ENCODE measurements at regions of chr15 and their contacts with region 1.

Region 1: DNA sequence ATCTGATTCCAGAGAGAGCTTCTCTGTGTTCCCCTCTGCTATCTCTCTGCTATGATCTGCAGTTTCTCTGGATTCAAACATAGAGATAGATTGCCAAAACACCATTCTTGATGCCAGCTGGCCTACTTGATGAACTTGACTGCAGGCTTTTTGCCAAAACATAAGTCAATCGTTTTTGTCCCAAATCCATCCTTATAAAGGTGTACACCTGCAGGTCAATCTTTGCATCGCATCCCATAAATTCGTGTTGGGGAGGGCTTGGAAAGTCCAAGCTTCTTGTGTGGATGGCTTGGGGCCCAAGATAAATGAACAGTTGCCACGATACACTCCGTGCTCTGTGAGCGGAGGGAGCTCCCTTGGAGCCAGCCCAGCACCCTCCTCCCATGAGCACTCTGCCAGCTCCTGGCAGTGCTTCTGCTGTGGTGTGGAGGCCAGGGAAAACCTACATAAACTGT is 2.7 kb downstream of the CERS3 start:
- DNase-seq: peak; percentile 84 to 90
- ATAC-seq: peak; percentile 85
- H3K4me3 ChIP-seq: peak overlapping the region in 1 of 4 donors; percentile 24
- H3K27ac ChIP-seq: peak overlapping the region; percentile 84 to 88 (median 86)
- H3K4me1 ChIP-seq: peaks cover 24 to 49% of the 10 kb centered on the region in 2 donors
- H3K27me3 ChIP-seq: no peaks in the 10 kb centered on the region
- CTCF ChIP-seq: peak in 4 of 5 experiments; percentile 4 to 40 (median 15)
- POLR2A ChIP-seq: no peak

Region 2: DNA sequence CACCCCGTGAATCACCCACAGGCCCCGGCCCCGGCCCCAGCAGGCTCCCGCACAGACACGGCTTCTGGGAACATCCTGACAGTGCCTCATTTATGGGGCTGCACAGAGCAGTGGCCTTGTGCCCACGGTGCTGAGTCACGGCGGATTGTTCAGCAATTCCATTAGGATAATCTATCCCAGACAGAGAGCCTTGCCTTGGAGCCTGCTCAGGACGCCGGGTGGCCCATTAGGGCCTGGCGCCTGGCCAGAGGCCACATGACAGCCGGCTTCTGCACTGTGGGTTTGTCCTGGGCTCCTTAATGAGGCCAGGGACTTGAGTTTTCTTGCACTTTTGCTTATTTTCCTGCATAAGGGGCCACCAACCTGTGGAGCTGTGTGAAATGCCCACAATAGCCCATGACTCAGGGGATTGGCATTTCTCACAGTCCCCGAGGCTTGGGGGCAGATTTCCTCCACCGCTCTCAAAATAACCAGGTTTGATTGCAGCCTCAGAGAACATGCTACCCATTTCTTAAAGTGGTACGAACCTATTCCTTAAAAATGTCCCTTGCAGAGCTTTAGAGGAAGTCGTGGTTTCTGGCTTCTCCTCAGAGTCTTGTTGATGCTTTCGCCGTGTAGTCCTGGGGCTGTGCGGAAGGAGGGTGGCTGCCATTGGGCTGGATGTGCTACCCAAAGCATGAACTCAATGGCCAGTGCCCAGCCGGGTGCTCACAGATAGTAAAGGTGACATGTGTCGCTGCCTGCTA is 1402.2 kb before region 1 on chr15:
- in situ Hi-C with region 1: no loop called
- intact Hi-C with region 1: loop called (anchors 10 kb)
- DNase-seq: peak; percentile 85 to 93
- ATAC-seq: peak; percentile 82 to 88
- H3K4me3 ChIP-seq: peak overlapping the region; percentile 33 to 59 (median 44)
- H3K27ac ChIP-seq: peak overlapping the region; percentile 88 to 97 (median 94)
- H3K4me1 ChIP-seq: peaks cover 89 to 91% of the 10 kb centered on the region in 2 donors
- H3K27me3 ChIP-seq: no peaks in the 10 kb centered on the region
- CTCF ChIP-seq: no peak
- POLR2A ChIP-seq: peak; percentile 40 to 52

Measured in gastrocnemius medialis (tissue), 4 donors.